ENCODE measurements at regions of chr1 and their contacts with region 1.

Region 1: GRCh38 chr1:166457700-166458099 is 290.9 kb upstream of the FAM78B start:
- DNase-seq: no peak
- H3K4me3 ChIP-seq: no peak overlapping the region
- H3K27ac ChIP-seq: no peak overlapping the region
- H3K4me1 ChIP-seq: no peaks in the 10 kb centered on the region
- H3K27me3 ChIP-seq: peaks cover 2% of the 10 kb centered on the region
- CTCF ChIP-seq: no peak

Region 2: GRCh38 chr1:165949335-165950130 is 508.2 kb before region 1 on chr1:
- CTCF ChIA-PET with region 1: no interaction called
- dilution Hi-C with region 1: loop called (anchors 10 kb)
- in situ Hi-C with region 1: no loop called
- intact Hi-C with region 1: no loop called
- DNase-seq: no peak
- H3K4me3 ChIP-seq: no peak overlapping the region
- H3K27ac ChIP-seq: no peak overlapping the region
- H3K4me1 ChIP-seq: no peaks in the 10 kb centered on the region
- H3K27me3 ChIP-seq: no peaks in the 10 kb centered on the region
- CTCF ChIP-seq: no peak